Gastrocnemius medialis (tissue), 4 donors: ENCODE measurements at regions of chr17 and their contacts with region 1.

Region 1: GRCh38 chr17:71527311-71527710 is 593.5 kb upstream of the SOX9 start:
- DNase-seq: no peak
- ATAC-seq: no peak
- H3K4me3 ChIP-seq: no peak overlapping the region
- H3K27ac ChIP-seq: no peak overlapping the region
- H3K4me1 ChIP-seq: no peaks in the 10 kb centered on the region
- H3K27me3 ChIP-seq: peaks cover 0 to 4% (median 0%) of the 10 kb centered on the region in 3 donors
- CTCF ChIP-seq: no peak
- POLR2A ChIP-seq: no peak

Region 2: DNA sequence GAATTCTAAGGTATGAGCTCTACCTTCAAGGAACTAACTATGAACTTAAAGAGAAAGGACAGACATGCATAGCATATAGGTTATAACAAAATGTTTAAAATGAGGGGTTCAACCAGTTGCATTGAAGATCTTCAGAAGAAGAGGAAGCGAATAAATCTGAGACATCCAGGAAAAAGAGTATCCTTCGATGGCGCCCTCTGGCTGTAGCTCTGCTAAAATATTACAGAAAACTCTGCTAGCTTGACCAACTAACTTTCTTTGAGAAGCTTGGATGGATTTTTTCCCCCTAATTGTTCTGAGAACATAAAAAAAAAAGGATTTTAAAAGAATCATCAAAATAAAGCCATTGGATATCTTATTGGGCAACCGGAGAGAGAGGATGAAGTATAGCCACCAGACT is 66.4 kb before region 1 on chr17:
- in situ Hi-C with region 1: no loop called
- intact Hi-C with region 1: loop called (anchors 10 kb)
- DNase-seq: no peak
- ATAC-seq: no peak
- H3K4me3 ChIP-seq: no peak overlapping the region
- H3K27ac ChIP-seq: no peak overlapping the region
- H3K4me1 ChIP-seq: no peaks in the 10 kb centered on the region
- H3K27me3 ChIP-seq: no peaks in the 10 kb centered on the region
- CTCF ChIP-seq: peak in 1 of 5 experiments; percentile 10
- POLR2A ChIP-seq: no peak

Region 3: DNA sequence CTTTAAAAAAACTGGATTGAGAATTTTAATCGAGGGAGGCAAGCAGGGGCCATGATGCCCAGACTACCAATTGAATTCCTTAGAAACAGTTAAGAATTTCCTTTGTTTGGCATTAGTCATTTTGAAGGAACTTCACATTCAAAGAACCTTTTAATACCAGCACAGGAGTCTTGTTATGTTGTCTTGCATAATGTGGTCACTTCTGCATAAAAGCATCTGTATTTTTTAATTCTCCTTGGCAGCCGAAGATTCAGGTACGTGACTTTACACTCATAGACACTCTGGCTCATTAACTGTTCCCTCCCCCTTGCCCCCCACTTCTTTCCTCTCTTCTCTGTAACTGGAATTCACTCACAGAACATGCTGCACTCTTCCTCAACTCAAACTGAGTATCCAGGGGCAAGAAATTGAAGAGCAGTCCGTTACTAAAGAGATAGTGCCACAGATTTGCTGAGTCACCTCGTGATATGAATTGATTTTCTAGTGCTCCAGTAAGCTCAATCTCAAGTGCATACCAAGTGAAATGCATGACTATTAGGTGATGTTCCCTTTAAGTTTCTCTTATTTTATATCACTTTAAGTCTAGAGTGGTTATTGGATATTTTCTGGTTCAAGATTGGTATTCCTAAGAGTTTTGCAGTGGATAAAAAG is 21.4 kb after region 1 on chr17:
- in situ Hi-C with region 1: no loop called
- intact Hi-C with region 1: no loop called
- DNase-seq: no peak
- ATAC-seq: no peak
- H3K4me3 ChIP-seq: no peak overlapping the region
- H3K27ac ChIP-seq: no peak overlapping the region
- H3K4me1 ChIP-seq: no peaks in the 10 kb centered on the region
- H3K27me3 ChIP-seq: no peaks in the 10 kb centered on the region
- CTCF ChIP-seq: no peak
- POLR2A ChIP-seq: no peak